B cell (primary cell): ENCODE measurements at regions of chr2 and their contacts with region 1.

Region 1: GRCh38 chr2:148726228-148726627 is 81.7 kb downstream of the EPC2 start:
- DNase-seq: no peak
- ATAC-seq: no peak
- H3K4me3 ChIP-seq: no peak overlapping the region
- H3K4me3 Mint-ChIP-seq: peak overlapping the region; percentile 42
- H3K27ac ChIP-seq: no peak overlapping the region
- H3K27ac Mint-ChIP-seq: no peak overlapping the region
- H3K4me1 ChIP-seq: peaks cover 9 to 29% of the 10 kb centered on the region in 2 donors
- H3K4me1 Mint-ChIP-seq: peaks cover 70% of the 10 kb centered on the region
- H3K27me3 ChIP-seq: no peaks in the 10 kb centered on the region
- H3K27me3 Mint-ChIP-seq: no peaks in the 10 kb centered on the region
- CTCF ChIP-seq: no peak

Region 2: GRCh38 chr2:148653437-148653836 is 72.8 kb before region 1 on chr2:
- CTCF ChIA-PET with region 1: no interaction called
- POLR2A ChIA-PET with region 1: no interaction called
- intact Hi-C with region 1: loop called (anchors 5 kb)
- DNase-seq: peak; percentile 50
- ATAC-seq: peak; percentile 73
- H3K4me3 ChIP-seq: peak overlapping the region in 3 of 5 experiments; percentile 1 to 25 (median 18)
- H3K4me3 Mint-ChIP-seq: peak overlapping the region; percentile 78
- H3K27ac ChIP-seq: peak overlapping the region in 1 of 2 donors; percentile 30
- H3K27ac Mint-ChIP-seq: peak overlapping the region; percentile 46
- H3K4me1 ChIP-seq: peaks cover 38 to 75% of the 10 kb centered on the region in 2 donors
- H3K4me1 Mint-ChIP-seq: peaks cover 85% of the 10 kb centered on the region
- H3K27me3 ChIP-seq: no peaks in the 10 kb centered on the region
- H3K27me3 Mint-ChIP-seq: no peaks in the 10 kb centered on the region
- CTCF ChIP-seq: no peak

Region 3: DNA sequence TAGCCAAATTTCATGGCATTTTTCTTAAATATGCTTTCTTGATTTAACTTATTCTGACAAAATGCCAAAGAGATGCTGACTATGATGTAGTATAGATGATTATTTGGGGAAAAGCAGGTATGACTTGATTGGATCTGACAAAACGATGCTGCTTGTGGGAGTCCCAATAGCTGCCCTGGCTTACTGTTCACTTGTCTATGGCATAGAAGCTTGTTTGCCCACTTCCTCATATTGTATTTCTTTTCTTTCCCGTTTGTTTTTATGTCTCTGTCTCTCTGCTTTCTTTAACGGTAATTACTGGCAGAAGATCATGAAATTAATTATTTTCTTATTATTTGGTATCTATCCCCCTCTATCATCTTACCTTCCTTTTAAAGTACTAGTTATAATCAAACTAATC is 38.7 kb before region 1 on chr2:
- CTCF ChIA-PET with region 1: no interaction called
- POLR2A ChIA-PET with region 1: no interaction called
- intact Hi-C with region 1: loop called (anchors 5 kb)
- DNase-seq: no peak
- ATAC-seq: no peak
- H3K4me3 ChIP-seq: no peak overlapping the region
- H3K4me3 Mint-ChIP-seq: no peak overlapping the region
- H3K27ac ChIP-seq: no peak overlapping the region
- H3K27ac Mint-ChIP-seq: no peak overlapping the region
- H3K4me1 ChIP-seq: peaks cover 0 to 4% of the 10 kb centered on the region in 2 donors
- H3K4me1 Mint-ChIP-seq: peaks cover 38% of the 10 kb centered on the region
- H3K27me3 ChIP-seq: no peaks in the 10 kb centered on the region
- H3K27me3 Mint-ChIP-seq: no peaks in the 10 kb centered on the region
- CTCF ChIP-seq: no peak